Activated naive CD4-positive, alpha-beta T cell treated with anti-CD3 and anti-CD28 coated beads for 36 hours (primary cell): ENCODE measurements at regions of chr2 and their contacts with region 1.

Region 1: DNA sequence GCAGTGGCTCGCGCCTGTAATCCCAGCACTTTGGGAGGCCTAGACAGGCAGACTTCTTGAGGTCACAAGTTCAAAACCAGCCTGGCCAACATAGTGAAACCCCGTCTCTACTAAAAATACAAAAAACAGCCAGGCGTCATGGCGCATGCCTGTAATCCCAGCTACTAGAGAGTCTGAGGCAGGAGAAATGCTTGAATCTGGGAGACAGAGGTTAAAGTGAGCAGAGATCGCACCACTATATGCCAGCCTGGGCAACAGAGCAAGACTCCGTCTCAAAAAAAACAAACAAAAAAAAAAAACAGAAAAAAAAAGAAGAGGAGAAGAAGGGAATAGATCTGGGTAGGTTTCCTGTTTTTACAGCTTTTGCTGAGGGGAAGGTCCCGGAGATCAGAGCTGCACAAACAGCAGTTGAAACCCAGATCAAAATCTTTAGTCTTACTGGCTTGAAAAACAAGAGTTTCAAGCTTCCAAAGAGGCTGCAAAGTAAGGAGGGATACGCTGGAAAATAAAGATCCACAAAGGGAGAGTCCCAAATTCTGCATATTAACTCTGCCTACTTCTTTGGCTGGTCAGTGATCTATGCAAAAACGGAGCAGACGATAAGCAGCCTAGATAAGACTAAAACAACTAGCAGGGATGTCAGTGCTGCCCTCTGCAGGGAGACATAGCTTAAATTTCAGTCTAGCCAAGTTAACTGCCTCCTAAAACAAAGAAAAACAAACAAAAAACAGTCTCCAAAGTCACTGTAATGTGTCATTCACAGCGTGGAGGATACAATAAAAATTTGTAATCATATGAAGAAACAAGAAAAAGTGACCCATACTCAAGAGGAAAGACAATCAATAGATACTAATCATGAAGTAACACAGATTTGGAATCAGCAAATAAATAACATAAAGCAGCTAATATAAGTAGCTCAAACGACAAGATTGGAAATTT is 74.1 kb downstream of the TLK1 start:
- DNase-seq: peak; percentile 80
- H3K4me3 Mint-ChIP-seq: peak overlapping the region; percentile 77
- H3K27ac Mint-ChIP-seq: peak overlapping the region; percentile 74
- H3K4me1 Mint-ChIP-seq: peaks cover 65% of the 10 kb centered on the region
- H3K27me3 Mint-ChIP-seq: no peaks in the 10 kb centered on the region

Region 2: DNA sequence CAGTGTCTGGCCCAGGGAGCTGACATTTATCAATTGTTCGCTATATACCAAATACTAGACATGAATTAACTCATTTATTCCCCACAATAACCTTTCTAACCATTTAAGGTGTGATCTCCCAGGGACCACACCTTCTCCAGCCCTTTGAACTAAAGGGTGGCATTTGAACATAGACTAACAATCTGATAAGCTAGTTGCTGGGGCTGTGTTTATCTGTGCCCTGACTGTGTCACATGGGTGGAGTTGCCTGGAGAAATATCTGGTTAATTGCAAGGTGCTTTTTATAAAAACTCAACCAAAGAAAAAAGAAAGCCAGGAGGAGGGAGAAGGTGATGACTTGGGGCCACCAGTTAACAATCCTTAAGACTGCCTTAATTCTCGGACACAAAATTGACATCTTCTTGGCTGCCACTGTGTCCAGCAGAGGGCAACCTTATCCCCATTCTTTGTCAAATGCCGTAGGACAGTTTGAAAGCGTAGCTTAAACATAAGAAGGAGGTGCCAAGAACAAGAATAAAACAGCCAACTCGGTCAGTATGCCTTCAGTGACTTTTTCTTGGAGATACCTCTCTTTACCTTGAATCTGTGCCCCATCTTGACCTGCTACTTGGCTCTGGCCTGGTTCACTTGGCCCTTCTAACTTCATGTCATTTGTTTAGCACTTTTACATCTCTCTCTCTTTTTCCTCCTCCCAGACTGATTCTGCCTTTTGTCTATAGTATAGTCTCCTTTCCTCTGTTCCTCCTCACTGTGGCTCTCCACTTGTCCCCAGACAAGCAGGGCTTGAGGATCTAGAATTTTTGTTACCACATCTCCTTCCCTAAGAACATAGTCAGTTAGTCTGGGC is 725.3 kb before region 1 on chr2:
- CTCF ChIA-PET with region 1: no interaction called
- intact Hi-C with region 1: loop called (anchors 10 kb)
- DNase-seq: peak; percentile 77
- H3K4me3 Mint-ChIP-seq: no peak overlapping the region
- H3K27ac Mint-ChIP-seq: no peak overlapping the region
- H3K4me1 Mint-ChIP-seq: peaks cover 28% of the 10 kb centered on the region
- H3K27me3 Mint-ChIP-seq: peaks cover 6% of the 10 kb centered on the region

Region 3: GRCh38 chr2:170991399-170992182 is 95.0 kb before region 1 on chr2:
- CTCF ChIA-PET with region 1: interaction called, 11 read pairs
- intact Hi-C with region 1: no loop called
- DNase-seq: no peak
- H3K4me3 Mint-ChIP-seq: no peak overlapping the region
- H3K27ac Mint-ChIP-seq: no peak overlapping the region
- H3K4me1 Mint-ChIP-seq: peaks cover 8% of the 10 kb centered on the region
- H3K27me3 Mint-ChIP-seq: no peaks in the 10 kb centered on the region

Region 4: GRCh38 chr2:171044416-171044815 is 42.2 kb before region 1 on chr2:
- CTCF ChIA-PET with region 1: interaction called, 3 read pairs
- intact Hi-C with region 1: loop called (anchors 2 kb)
- DNase-seq: no peak
- H3K4me3 Mint-ChIP-seq: no peak overlapping the region
- H3K27ac Mint-ChIP-seq: peak overlapping the region; percentile 32
- H3K4me1 Mint-ChIP-seq: peaks cover 29% of the 10 kb centered on the region
- H3K27me3 Mint-ChIP-seq: no peaks in the 10 kb centered on the region

Region 5: GRCh38 chr2:171244970-171245782 is 158.6 kb after region 1 on chr2:
- CTCF ChIA-PET with region 1: interaction called, 5 read pairs
- intact Hi-C with region 1: loop called (anchors 5 kb)
- DNase-seq: peak; percentile 32
- H3K4me3 Mint-ChIP-seq: no peak overlapping the region
- H3K27ac Mint-ChIP-seq: no peak overlapping the region
- H3K4me1 Mint-ChIP-seq: peaks cover 40% of the 10 kb centered on the region
- H3K27me3 Mint-ChIP-seq: no peaks in the 10 kb centered on the region

Region 6: DNA sequence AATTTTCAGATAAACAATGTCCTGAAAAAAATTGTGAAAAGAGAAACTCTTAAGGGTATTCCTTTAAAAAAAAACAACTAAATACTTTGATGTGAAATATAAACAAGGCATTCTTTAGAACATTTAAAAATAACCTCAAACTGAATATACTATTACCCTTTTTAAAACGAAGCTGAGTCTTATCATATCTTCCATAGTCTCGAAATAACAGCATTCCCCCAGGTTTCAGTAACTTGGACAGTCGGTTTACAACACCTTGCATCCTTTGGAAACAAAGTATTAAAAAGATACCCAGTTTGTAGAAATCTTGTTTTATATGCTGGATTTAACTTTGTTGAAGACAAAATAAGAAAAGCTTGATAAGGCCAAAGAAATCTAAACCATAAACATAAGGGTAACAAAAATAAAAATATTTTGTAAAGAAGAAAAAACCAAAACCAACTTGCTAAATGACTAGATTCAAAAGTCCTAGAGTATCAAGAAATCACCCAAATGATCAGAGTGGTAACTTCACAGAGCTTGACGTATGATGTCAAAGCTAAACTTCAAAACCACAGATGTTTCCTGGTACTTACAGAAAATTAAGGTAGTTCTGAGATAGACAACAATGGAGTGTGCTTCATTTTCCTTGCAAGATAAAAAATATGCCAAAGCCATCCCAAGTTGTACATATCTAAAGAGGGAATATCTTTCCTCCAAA is 239.4 kb after region 1 on chr2:
- CTCF ChIA-PET with region 1: no interaction called
- intact Hi-C with region 1: no loop called
- DNase-seq: no peak
- H3K4me3 Mint-ChIP-seq: no peak overlapping the region
- H3K27ac Mint-ChIP-seq: peak overlapping the region; percentile 32
- H3K4me1 Mint-ChIP-seq: peaks cover 41% of the 10 kb centered on the region
- H3K27me3 Mint-ChIP-seq: no peaks in the 10 kb centered on the region

Region 7: GRCh38 chr2:171416009-171416926 is 329.6 kb after region 1 on chr2:
- CTCF ChIA-PET with region 1: interaction called, 4 read pairs
- intact Hi-C with region 1: loop called (anchors 1 kb)
- DNase-seq: peak; percentile 96
- H3K4me3 Mint-ChIP-seq: peak overlapping the region; percentile 32
- H3K27ac Mint-ChIP-seq: peak overlapping the region; percentile 92
- H3K4me1 Mint-ChIP-seq: peaks cover 38% of the 10 kb centered on the region
- H3K27me3 Mint-ChIP-seq: no peaks in the 10 kb centered on the region